Heart right ventricle (tissue), 16 donors: ENCODE measurements at regions of chr17 and their contacts with region 1.

Region 1: DNA sequence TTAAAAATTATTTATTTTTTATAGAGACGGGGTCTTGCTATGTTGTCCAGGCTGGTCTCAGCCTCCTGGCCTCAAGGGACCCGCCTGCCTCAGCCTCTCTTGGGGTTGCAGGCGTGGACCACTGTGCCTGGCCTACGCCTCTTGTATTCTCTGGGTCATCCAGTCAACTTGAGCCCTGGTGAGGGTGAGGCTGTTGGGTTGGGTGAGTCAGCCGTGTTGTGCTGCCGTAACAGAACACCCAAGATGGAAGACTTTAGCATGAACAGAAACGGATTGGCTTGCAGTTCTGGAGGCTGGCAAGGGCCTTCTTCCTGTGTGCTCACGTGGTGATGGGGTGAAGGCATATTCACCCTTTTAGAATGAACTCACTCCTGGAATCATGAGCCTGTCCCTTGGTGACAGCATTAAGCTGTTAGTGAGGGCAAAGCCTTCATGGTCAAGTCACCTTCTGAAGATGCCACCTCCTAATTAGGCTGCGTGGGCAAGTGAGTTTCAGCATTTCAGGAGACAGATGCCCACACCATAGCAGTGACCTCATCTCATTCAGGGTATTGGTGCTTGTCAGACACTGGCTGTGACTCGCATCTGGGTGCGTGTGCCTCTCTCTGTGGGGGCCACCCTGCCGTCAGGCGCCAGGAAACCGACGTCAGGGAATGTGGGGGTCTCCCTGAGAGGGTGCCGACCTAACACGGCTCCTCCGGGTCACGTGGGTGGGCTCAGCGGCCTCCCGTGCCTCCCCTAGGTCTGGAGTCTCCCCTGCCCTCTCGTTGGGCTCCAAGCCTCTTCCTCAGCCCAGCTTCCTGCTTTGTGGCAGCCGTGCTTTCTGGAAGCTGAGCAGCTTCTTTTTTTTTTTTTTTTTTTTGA is 49.8 kb downstream of the WDR45B start:
- DNase-seq: no peak
- ATAC-seq: no peak
- H3K4me3 ChIP-seq: no peak overlapping the region
- H3K27ac ChIP-seq: peak overlapping the region in 1 of 10 donors; percentile 44
- H3K4me1 ChIP-seq: peaks cover 6 to 56% (median 41%) of the 10 kb centered on the region in 9 donors
- H3K27me3 ChIP-seq: no peaks in the 10 kb centered on the region
- CTCF ChIP-seq: no peak

Region 2: GRCh38 chr17:82639628-82640027 is 41.1 kb after region 1 on chr17:
- intact Hi-C with region 1: loop called in 1 of 10 experiments (anchors 5 kb)
- DNase-seq: no peak
- ATAC-seq: peak in 3 of 8 donors; percentile 25 to 68 (median 41)
- H3K4me3 ChIP-seq: no peak overlapping the region
- H3K27ac ChIP-seq: no peak overlapping the region
- H3K4me1 ChIP-seq: peaks cover 0 to 25% (median 0%) of the 10 kb centered on the region in 9 donors
- H3K27me3 ChIP-seq: no peaks in the 10 kb centered on the region
- CTCF ChIP-seq: no peak

Region 3: GRCh38 chr17:82698065-82698973 is 99.8 kb after region 1 on chr17 and contains the start of gene RAB40B:
- intact Hi-C with region 1: no loop called
- DNase-seq: peak; percentile 99
- ATAC-seq: peak; percentile 98 to 100 (median 100)
- H3K4me3 ChIP-seq: peak within 1 kb of the TSS; percentile 66 to 96 (median 76)
- H3K27ac ChIP-seq: peak within 1 kb of the TSS; percentile 29 to 78 (median 62)
- H3K4me1 ChIP-seq: peaks cover 4 to 20% (median 17%) of the 10 kb centered on the region in 9 donors
- H3K27me3 ChIP-seq: peaks cover 0 to 15% (median 0%) of the 10 kb centered on the region in 7 donors
- CTCF ChIP-seq: no peak
- total RNA-seq, gene RAB40B: 16.9 to 42.4 (median 21.7) TPM

Region 4: DNA sequence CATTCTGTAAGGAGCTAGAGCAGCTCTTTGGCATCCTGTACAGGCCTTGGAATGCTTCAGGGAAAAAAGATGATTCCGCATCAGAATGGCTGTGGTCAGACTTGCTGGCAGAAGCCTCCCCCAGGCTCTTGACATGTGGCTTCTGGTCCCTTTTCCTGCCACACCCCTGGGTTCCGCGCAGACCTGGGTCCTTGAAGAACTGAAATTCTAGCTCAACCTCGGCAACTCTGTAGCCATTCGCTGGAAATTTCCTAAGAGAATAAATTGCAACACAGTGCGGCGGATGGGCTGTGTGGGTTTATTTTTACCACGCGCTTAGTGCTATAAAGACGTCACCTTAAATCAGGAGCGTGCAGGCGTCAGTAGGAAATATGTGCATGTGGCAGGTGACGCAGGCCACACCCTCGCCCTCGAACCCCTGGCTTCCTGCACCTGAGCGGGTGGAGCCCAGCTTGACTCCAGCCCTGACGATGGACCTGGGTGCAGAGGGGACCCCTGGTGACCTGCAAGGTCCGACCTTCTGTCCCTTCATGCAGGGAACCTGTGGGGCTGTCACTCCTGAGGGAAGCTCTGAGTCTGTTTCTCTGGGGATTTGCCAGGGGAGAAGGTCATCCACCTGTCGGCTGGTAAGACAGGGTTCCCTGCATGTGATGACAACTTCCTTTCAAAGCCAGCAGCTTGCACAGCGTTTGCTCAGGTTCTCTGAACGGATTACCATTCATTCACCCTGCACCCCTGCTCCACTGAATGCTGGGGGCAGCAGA is 527.2 kb after region 1 on chr17:
- intact Hi-C with region 1: no loop called
- DNase-seq: no peak
- ATAC-seq: peak in 4 of 8 donors; percentile 44 to 66 (median 56)
- H3K4me3 ChIP-seq: peak overlapping the region in 1 of 10 donors; percentile 3
- H3K27ac ChIP-seq: no peak overlapping the region
- H3K4me1 ChIP-seq: peaks cover 0 to 19% (median 0%) of the 10 kb centered on the region in 9 donors
- H3K27me3 ChIP-seq: peaks cover 0 to 17% (median 4%) of the 10 kb centered on the region in 7 donors
- CTCF ChIP-seq: no peak